Astrocyte of the cerebellum (primary cell): ENCODE measurements at regions of chr1 and their contacts with region 1.

Region 1: GRCh38 chr1:36285448-36286101 is 20.6 kb upstream of the SH3D21 start:
- DNase-seq: peak; percentile 88
- H3K4me3 ChIP-seq: no peak overlapping the region
- CTCF ChIP-seq: peak; percentile 65

Region 2: DNA sequence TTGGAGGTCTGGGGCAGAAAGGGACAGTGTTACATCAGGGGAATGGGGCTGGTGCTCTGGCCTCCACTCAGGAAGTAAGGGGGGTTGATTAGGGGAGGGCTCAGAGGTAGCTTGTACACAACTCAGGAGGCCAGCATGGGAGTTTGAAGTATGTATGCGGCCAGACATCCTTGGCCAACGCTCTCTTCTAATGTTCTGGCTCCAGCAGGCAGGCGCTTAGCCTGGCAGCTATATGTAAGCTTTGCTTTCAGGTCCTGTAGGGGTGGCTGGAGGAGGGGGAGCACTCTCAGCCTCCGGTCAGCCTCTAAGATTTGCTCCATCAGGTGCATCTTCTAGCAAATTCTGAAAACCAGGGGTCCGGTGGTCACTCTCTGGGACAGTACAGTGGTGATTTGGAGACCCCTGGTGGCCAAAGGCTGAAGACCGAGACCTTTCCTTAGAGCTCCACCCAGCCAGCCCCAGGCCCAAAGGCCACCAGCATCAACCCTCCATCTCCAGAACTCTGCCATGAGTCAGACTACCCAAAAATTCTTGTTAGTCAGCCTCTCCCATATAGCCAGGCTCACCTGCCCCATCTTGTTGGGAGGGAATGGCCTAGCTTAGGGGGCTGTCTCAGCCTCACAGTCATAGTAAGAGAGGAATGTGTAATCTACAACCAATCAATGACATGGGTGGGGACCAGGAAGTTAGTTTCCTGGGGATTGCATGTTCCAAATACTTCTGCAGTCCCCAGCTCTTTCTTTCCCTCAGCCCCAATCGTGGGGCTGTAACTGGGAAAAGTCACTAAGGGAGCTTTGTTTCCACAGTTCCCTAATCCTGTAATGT is 150.9 kb before region 1 on chr1:
- in situ Hi-C with region 1: loop called (anchors 5 kb)
- DNase-seq: peak; percentile 50
- H3K4me3 ChIP-seq: no peak overlapping the region
- CTCF ChIP-seq: peak; percentile 79

Region 3: GRCh38 chr1:36224537-36225282 is 60.9 kb before region 1 on chr1:
- in situ Hi-C with region 1: loop called (anchors 5 kb)
- DNase-seq: peak; percentile 77
- H3K4me3 ChIP-seq: peak overlapping the region; percentile 78
- CTCF ChIP-seq: peak; percentile 53

Region 4: DNA sequence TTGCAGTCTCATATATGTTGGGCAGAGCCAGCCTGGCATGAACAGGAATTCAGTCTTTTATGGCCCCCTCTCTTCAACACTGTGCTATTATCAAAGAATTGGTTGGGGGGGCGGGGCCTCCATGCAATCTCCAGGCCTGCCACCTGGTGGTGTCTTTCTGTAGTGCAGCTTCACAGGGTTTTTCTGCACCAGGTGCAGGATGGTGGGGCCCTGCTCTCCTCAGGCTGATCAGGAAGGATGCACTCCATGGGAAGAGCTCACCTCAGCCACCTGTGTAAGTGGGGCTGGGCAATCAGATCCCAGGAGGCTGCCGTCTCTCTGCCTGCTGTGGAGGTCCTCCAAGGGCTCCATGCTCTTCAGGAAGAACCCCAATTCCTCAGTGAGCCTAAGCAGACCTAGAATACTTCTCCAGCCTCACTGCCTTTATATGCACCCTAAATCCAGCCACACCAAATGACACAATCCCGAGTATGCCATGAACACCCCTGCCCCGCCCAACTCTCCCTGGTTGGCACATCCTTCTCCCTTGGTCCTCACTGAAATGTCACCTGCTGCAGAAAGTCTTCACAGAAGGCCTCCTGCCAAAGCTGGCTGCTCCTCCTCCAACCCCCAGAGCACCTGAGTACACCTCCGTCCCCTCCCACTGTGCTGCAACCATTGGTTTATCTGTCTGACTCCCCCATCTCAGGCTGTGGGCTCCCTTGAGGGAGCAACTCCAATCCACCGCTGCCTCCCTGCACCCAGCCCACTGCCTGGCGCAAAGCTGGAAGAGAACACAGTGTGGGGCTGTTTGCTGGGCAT is 83.7 kb after region 1 on chr1:
- in situ Hi-C with region 1: no loop called
- DNase-seq: peak; percentile 27
- H3K4me3 ChIP-seq: no peak overlapping the region
- CTCF ChIP-seq: peak; percentile 94